Dorsolateral prefrontal cortex (tissue), 120 donors: ENCODE measurements at regions of chr12 and their contacts with region 1.

Region 1: GRCh38 chr12:101773650-101774162 is 34.4 kb upstream of the SYCP3 start:
- DNase-seq: peak in 9 of 10 donors; percentile 27 to 71 (median 58)
- H3K4me3 ChIP-seq: peak overlapping the region in 1 of 59 donors; percentile 15
- H3K27ac ChIP-seq: no peak overlapping the region
- H3K27me3 ChIP-seq: no peaks in the 10 kb centered on the region
- CTCF ChIP-seq: peak; percentile 91 to 100 (median 98)

Region 2: GRCh38 chr12:101407436-101408345 is 366.0 kb before region 1 on chr12 and contains the start of gene ARL1:
- intact Hi-C with region 1: loop called (anchors 5 to 10 kb)
- DNase-seq: peak; percentile 77 to 91 (median 83)
- H3K4me3 ChIP-seq: peak within 1 kb of the TSS; percentile 69 to 99 (median 92)
- H3K27ac ChIP-seq: peak within 1 kb of the TSS; percentile 68 to 98 (median 94)
- H3K27me3 ChIP-seq: no peaks in the 10 kb centered on the region
- CTCF ChIP-seq: peak in 31 of 56 donors; percentile 7 to 58 (median 33)
- total RNA-seq, gene ARL1: 52.3 to 116 (median 86.3) TPM

Region 3: GRCh38 chr12:101414533-101415119 is 359.1 kb before region 1 on chr12:
- intact Hi-C with region 1: loop called (anchors 5 to 10 kb)
- DNase-seq: peak in 2 of 10 donors; percentile 13 to 16
- H3K4me3 ChIP-seq: no peak overlapping the region
- H3K27ac ChIP-seq: no peak overlapping the region
- H3K27me3 ChIP-seq: no peaks in the 10 kb centered on the region
- CTCF ChIP-seq: peak; percentile 49 to 76 (median 64)

Region 4: GRCh38 chr12:101819467-101819866 is 45.8 kb after region 1 on chr12:
- intact Hi-C with region 1: no loop called
- DNase-seq: no peak
- H3K4me3 ChIP-seq: no peak overlapping the region
- H3K27ac ChIP-seq: no peak overlapping the region
- H3K27me3 ChIP-seq: no peaks in the 10 kb centered on the region
- CTCF ChIP-seq: no peak

Region 5: GRCh38 chr12:101830367-101831325 is 56.9 kb after region 1 on chr12 and contains the start of gene GNPTAB:
- intact Hi-C with region 1: loop called (anchors 1 to 5 kb)
- DNase-seq: peak; percentile 81 to 95 (median 91)
- H3K4me3 ChIP-seq: peak within 1 kb of the TSS; percentile 51 to 98 (median 86)
- H3K27ac ChIP-seq: peak within 1 kb of the TSS in 57 of 59 donors; percentile 32 to 93 (median 79)
- H3K27me3 ChIP-seq: no peaks in the 10 kb centered on the region
- CTCF ChIP-seq: peak; percentile 50 to 88 (median 73)
- total RNA-seq, gene GNPTAB: 43.8 to 111 (median 81.7) TPM

Region 6: DNA sequence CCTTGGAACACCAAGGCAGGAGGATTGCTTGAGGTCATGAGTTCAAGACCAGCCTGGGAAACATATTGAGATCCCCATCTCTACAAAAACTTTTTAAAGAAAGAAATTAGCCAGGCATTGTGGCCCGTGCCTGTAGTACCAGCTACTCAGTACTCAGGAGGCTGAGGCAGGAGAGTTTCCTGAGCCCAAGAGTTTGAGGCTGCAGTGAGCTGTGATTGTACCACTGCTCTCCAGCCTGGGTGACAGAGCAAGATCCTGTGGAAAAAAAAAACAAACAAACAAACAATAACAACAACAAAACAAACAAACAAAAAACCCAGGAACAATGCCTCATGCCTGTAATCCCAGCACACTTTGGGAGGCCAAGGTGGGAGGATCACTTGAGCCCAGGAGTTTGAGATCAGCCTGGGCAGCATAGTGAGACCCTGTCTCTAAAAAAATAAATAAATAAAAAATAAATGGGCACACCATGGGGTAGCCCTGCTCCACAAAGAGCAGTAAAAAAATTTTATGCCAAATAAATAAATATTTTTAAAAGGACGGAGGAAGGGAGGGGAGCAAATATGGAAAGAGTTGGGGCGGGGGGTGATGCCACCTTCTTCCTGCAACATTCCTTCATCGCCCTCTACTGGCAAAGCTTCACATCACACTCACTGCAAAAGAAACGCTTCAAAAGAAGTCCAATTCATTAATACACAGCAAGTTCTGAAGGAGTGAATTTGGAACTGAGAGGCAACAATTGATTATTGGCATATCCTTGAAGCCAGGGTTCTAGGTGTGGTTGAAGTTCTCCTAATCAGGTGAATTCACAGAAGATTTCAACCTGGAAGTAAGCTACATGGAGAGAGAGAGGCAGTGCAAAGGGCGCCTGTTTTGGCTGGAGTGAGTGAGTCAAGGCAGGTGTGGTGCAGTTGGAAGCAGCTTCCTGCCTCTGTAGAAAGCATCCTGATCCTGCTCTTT is 65.9 kb after region 1 on chr12:
- intact Hi-C with region 1: loop called (anchors 2 to 5 kb)
- DNase-seq: peak in 5 of 10 donors; percentile 55 to 65 (median 57)
- H3K4me3 ChIP-seq: peak overlapping the region in 1 of 59 donors; percentile 8
- H3K27ac ChIP-seq: no peak overlapping the region
- H3K27me3 ChIP-seq: no peaks in the 10 kb centered on the region
- CTCF ChIP-seq: peak; percentile 75 to 95 (median 89)